CD8-positive, alpha-beta T cell (primary cell): ENCODE measurements at regions of chr15 and their contacts with region 1.

Region 1: GRCh38 chr15:78195735-78196201 is 38.6 kb downstream of the ACSBG1 start:
- DNase-seq: peak; percentile 18 to 74 (median 41)
- ATAC-seq: peak; percentile 87
- H3K4me3 ChIP-seq: no peak overlapping the region
- H3K4me3 Mint-ChIP-seq: no peak overlapping the region
- H3K27ac ChIP-seq: no peak overlapping the region
- H3K27ac Mint-ChIP-seq: no peak overlapping the region
- H3K4me1 ChIP-seq: no peaks in the 10 kb centered on the region
- H3K4me1 Mint-ChIP-seq: no peaks in the 10 kb centered on the region
- H3K27me3 ChIP-seq: no peaks in the 10 kb centered on the region
- H3K27me3 Mint-ChIP-seq: no peaks in the 10 kb centered on the region
- CTCF ChIP-seq: peak; percentile 72

Region 2: DNA sequence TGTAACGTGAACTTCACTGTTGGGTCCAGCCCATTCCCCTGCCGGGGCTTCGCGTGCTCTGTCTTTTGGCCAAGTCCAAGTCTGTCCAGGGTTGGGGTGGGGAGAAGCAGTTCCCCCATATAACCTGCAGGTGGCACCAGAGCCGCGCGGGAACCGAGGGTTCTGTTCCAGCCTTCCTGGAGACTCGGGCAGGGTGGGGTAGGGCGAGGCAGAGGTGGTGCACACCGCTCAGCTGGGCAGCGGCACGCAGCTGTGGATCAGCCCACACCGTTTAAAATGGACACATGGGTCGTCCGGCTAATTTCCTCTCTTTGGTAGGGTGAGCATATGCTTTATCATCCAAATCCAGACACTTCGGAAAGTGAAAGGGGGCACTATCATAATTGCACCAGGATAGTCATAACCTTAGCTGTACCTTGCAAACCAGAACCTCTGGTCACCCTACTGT is 236.3 kb before region 1 on chr15:
- CTCF ChIA-PET with region 1: interaction called, 48 read pairs
- POLR2A ChIA-PET with region 1: no interaction called
- intact Hi-C with region 1: loop called (anchors 1 to 2 kb)
- DNase-seq: peak; percentile 55 to 86 (median 73)
- ATAC-seq: peak; percentile 100
- H3K4me3 ChIP-seq: no peak overlapping the region
- H3K4me3 Mint-ChIP-seq: no peak overlapping the region
- H3K27ac ChIP-seq: no peak overlapping the region
- H3K27ac Mint-ChIP-seq: no peak overlapping the region
- H3K4me1 ChIP-seq: peaks cover 3% of the 10 kb centered on the region
- H3K4me1 Mint-ChIP-seq: no peaks in the 10 kb centered on the region
- H3K27me3 ChIP-seq: no peaks in the 10 kb centered on the region
- H3K27me3 Mint-ChIP-seq: peaks cover 2% of the 10 kb centered on the region
- CTCF ChIP-seq: peak; percentile 97

Region 3: GRCh38 chr15:78000091-78000926 is 195.5 kb before region 1 on chr15:
- CTCF ChIA-PET with region 1: interaction called, 4 read pairs
- POLR2A ChIA-PET with region 1: no interaction called
- intact Hi-C with region 1: loop called in 1 of 2 experiments (anchors 2 kb)
- DNase-seq: peak; percentile 56 to 85 (median 79)
- ATAC-seq: peak; percentile 99
- H3K4me3 ChIP-seq: no peak overlapping the region
- H3K4me3 Mint-ChIP-seq: no peak overlapping the region
- H3K27ac ChIP-seq: no peak overlapping the region
- H3K27ac Mint-ChIP-seq: peak overlapping the region; percentile 64
- H3K4me1 ChIP-seq: no peaks in the 10 kb centered on the region
- H3K4me1 Mint-ChIP-seq: peaks cover 6% of the 10 kb centered on the region
- H3K27me3 ChIP-seq: no peaks in the 10 kb centered on the region
- H3K27me3 Mint-ChIP-seq: no peaks in the 10 kb centered on the region
- CTCF ChIP-seq: peak; percentile 52

Region 4: GRCh38 chr15:78140292-78140691 is 55.5 kb before region 1 on chr15:
- CTCF ChIA-PET with region 1: interaction called, 25 read pairs
- POLR2A ChIA-PET with region 1: no interaction called
- intact Hi-C with region 1: no loop called
- DNase-seq: no peak
- ATAC-seq: no peak
- H3K4me3 ChIP-seq: no peak overlapping the region
- H3K4me3 Mint-ChIP-seq: no peak overlapping the region
- H3K27ac ChIP-seq: no peak overlapping the region
- H3K27ac Mint-ChIP-seq: no peak overlapping the region
- H3K4me1 ChIP-seq: no peaks in the 10 kb centered on the region
- H3K4me1 Mint-ChIP-seq: no peaks in the 10 kb centered on the region
- H3K27me3 ChIP-seq: no peaks in the 10 kb centered on the region
- H3K27me3 Mint-ChIP-seq: no peaks in the 10 kb centered on the region
- CTCF ChIP-seq: no peak

Region 5: DNA sequence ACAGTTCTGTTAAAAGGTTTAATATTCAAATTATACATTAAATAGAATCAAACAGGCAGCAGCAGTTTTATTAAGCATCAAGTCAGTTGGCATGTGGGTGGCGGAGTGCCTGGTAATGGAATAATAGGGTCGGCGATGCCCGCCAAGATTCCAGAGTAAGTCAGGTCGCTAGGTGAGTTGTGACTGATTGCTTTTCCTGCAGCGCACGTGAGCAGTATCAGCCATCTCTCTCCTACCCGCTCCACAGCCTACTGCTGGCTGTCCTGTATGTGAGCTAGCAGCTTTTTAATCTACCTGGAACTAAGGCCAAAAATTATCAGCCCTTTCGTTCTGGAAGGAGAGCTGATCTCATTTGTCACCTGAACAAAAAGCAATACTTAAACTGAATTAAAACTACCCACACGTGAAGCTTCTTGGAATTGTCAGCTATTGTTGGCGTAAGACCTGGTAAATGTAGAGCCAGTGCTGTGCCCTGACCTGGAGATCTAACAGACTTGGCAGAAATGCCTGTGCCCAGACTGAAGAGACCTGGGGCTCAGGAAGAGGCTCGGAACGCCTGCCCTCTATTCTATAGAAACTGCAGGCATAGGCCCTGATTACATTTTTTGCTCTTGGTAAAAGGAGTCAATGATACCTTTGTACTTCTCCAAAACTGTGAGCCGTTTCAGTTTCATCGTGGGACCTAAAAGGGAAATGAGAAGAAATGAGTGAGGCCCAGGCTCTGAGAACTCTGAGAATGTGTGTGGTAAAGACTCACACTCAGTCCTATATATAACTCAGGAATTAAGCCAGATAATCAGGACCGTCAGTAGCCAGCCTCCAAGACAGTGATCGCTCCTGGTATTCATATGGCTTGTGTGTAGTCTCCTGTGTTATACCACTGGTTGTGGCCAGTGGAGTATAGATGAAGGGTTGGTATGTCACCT is 24.7 kb before region 1 on chr15:
- CTCF ChIA-PET with region 1: interaction called, 19 read pairs
- POLR2A ChIA-PET with region 1: no interaction called
- intact Hi-C with region 1: no loop called
- DNase-seq: no peak
- ATAC-seq: no peak
- H3K4me3 ChIP-seq: no peak overlapping the region
- H3K4me3 Mint-ChIP-seq: no peak overlapping the region
- H3K27ac ChIP-seq: no peak overlapping the region
- H3K27ac Mint-ChIP-seq: no peak overlapping the region
- H3K4me1 ChIP-seq: peaks cover 26% of the 10 kb centered on the region
- H3K4me1 Mint-ChIP-seq: peaks cover 36% of the 10 kb centered on the region
- H3K27me3 ChIP-seq: no peaks in the 10 kb centered on the region
- H3K27me3 Mint-ChIP-seq: no peaks in the 10 kb centered on the region
- CTCF ChIP-seq: no peak

Region 6: DNA sequence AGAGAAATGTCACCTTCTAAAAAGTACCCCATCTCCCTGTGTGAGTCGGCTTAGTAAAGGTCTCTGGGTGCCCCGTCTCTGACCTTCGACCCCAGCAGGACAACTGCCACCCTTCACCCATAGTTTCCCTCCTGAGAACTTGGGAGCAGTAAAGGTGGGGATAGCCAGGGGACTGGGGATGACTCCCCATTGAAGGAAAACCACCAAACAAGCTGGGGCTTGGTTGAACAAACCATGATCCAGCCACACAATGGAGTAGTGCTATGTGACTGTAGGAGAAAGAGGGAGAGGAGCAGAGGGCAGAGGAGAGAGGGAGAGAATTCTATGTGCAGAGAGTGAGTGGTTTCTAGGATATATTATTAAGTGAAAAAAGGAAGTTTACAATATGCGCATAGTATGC is 12.9 kb before region 1 on chr15:
- CTCF ChIA-PET with region 1: interaction called, 19 read pairs
- POLR2A ChIA-PET with region 1: no interaction called
- intact Hi-C with region 1: no loop called
- DNase-seq: no peak
- ATAC-seq: no peak
- H3K4me3 ChIP-seq: no peak overlapping the region
- H3K4me3 Mint-ChIP-seq: no peak overlapping the region
- H3K27ac ChIP-seq: no peak overlapping the region
- H3K27ac Mint-ChIP-seq: no peak overlapping the region
- H3K4me1 ChIP-seq: no peaks in the 10 kb centered on the region
- H3K4me1 Mint-ChIP-seq: no peaks in the 10 kb centered on the region
- H3K27me3 ChIP-seq: no peaks in the 10 kb centered on the region
- H3K27me3 Mint-ChIP-seq: no peaks in the 10 kb centered on the region
- CTCF ChIP-seq: no peak

Region 7: DNA sequence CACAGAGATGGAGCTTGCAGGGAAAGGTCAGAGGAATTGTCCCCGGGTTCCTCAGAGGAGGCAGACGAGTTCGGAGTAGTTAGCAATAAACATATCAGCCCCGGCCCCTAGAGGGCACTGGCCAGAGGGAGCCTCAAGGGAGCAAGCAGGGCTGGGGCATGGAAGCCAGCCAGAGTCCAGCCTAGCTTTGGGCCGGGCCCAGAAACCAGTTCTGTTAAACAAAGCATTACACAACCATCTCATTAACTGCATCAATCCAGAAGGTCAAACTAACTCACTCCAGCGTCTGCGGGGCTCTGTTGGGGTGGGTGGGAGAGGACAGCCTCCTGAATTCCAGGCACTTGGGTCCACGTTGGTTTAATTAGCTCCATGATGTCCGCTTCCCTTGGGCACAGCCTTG is 201.2 kb after region 1 on chr15:
- CTCF ChIA-PET with region 1: no interaction called
- POLR2A ChIA-PET with region 1: no interaction called
- intact Hi-C with region 1: no loop called
- DNase-seq: no peak
- ATAC-seq: no peak
- H3K4me3 ChIP-seq: no peak overlapping the region
- H3K4me3 Mint-ChIP-seq: no peak overlapping the region
- H3K27ac ChIP-seq: no peak overlapping the region
- H3K27ac Mint-ChIP-seq: no peak overlapping the region
- H3K4me1 ChIP-seq: no peaks in the 10 kb centered on the region
- H3K4me1 Mint-ChIP-seq: no peaks in the 10 kb centered on the region
- H3K27me3 ChIP-seq: peaks cover 0 to 3% of the 10 kb centered on the region in 2 experiments
- H3K27me3 Mint-ChIP-seq: peaks cover under 1% of the 10 kb centered on the region
- CTCF ChIP-seq: no peak

Region 8: DNA sequence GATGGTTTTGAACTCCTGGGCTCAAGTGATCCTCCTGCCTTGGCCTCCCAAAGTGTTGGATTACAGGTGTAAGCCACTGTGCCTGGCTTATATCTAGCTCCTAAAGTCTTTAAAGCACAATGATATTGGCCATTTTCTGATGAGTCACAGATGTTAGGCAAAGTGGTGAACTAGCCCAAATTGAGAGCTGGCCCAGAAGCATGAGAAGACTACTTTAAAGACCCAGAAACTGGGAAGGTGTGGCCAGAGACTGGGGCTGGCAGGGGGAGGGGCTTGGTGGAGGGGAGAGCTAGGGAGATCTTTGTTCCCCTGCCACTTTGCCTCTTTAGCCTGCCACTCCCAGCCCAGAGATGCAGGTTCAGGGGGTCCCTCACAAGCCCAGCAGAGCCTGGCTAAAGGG is 403.4 kb after region 1 on chr15:
- CTCF ChIA-PET with region 1: no interaction called
- POLR2A ChIA-PET with region 1: no interaction called
- intact Hi-C with region 1: no loop called
- DNase-seq: no peak
- ATAC-seq: no peak
- H3K4me3 ChIP-seq: no peak overlapping the region
- H3K4me3 Mint-ChIP-seq: no peak overlapping the region
- H3K27ac ChIP-seq: no peak overlapping the region
- H3K27ac Mint-ChIP-seq: no peak overlapping the region
- H3K4me1 ChIP-seq: no peaks in the 10 kb centered on the region
- H3K4me1 Mint-ChIP-seq: no peaks in the 10 kb centered on the region
- H3K27me3 ChIP-seq: peaks cover 0 to 2% of the 10 kb centered on the region in 2 experiments
- H3K27me3 Mint-ChIP-seq: peaks cover 10% of the 10 kb centered on the region
- CTCF ChIP-seq: no peak